Activated naive CD8-positive, alpha-beta T cell treated with anti-CD3 and anti-CD28 coated beads, Interleukin-2, amount 10 ng/mL, durations not matched to agents 7 days and 5 days (primary cell): ENCODE measurements at regions of chr6 and their contacts with region 1.

Region 1: GRCh38 chr6:170087941-170088581 is 202.8 kb downstream of the DLL1 start:
- DNase-seq: peak; percentile 82
- ATAC-seq: peak; percentile 78
- H3K4me3 Mint-ChIP-seq: peak overlapping the region; percentile 94
- H3K27ac Mint-ChIP-seq: peak overlapping the region; percentile 98
- H3K4me1 Mint-ChIP-seq: peaks cover 33% of the 10 kb centered on the region
- H3K27me3 Mint-ChIP-seq: no peaks in the 10 kb centered on the region

Region 2: DNA sequence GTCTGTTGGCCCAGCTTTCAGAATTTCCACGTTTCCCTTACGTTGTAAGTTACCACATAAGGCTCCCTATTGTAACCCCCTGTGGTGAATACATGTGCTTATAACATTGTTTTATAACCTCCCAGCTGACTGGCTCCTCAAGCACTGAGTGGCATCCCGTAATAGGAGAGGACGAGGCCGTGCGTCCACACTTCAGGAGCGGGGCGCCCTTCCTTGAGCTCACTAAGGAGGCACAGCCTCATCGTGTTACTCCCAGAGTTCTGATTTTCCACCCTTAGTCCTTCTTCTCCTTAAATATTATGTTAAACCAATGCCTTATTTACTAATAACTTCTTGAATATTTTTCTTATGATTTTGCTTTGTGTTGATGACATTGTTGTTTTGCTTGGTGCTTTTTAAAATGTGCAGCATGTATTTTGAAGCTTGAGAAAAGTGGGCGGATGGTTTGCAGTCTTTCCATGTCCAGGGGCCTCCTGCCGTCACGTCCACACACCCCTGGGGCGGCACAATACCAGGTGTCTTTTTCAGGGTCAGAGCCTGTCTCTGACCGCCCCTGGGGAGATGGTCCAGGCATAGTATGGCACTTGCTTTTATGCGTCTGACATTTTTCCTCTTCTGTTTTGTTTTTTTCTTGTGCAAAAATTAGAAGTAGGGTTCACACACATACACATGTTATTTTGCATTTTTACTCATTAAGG is 21.0 kb after region 1 on chr6:
- POLR2A ChIA-PET with region 1: no interaction called
- DNase-seq: no peak
- ATAC-seq: no peak
- H3K4me3 Mint-ChIP-seq: no peak overlapping the region
- H3K27ac Mint-ChIP-seq: no peak overlapping the region
- H3K4me1 Mint-ChIP-seq: peaks cover 2% of the 10 kb centered on the region
- H3K27me3 Mint-ChIP-seq: peaks cover 22% of the 10 kb centered on the region

Region 3: GRCh38 chr6:170271771-170272314 is 183.8 kb after region 1 on chr6:
- POLR2A ChIA-PET with region 1: interaction called, 24 read pairs
- DNase-seq: peak; percentile 82
- ATAC-seq: peak; percentile 94
- H3K4me3 Mint-ChIP-seq: peak overlapping the region; percentile 73
- H3K27ac Mint-ChIP-seq: peak overlapping the region; percentile 90
- H3K4me1 Mint-ChIP-seq: peaks cover 15% of the 10 kb centered on the region
- H3K27me3 Mint-ChIP-seq: peaks cover 19% of the 10 kb centered on the region